ENCODE measurements at regions of chr6 and their contacts with region 1.

Region 1: DNA sequence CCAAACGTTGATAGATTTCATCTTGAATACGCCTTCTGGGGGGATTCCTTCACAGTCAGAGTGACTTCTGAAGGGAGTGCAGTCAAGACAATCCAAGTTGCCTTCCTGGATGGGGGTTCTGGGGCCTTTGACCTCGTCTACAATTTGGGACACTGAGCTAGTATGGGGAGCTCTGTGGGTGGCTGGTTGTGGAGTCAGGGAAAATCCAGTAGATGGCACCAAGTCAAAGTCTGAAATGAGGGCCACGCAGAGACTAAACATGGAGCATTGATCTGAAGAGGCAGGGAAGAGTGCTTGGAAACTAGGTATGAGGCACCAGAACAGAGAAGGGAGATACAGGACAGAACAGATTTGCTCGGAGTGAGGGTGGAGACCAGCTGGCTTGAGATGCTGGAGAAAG is 43.6 kb upstream of the CCN6 start:
- DNase-seq: peak in 2 of 5 donors; percentile 33 to 51
- H3K4me3 ChIP-seq: no peak overlapping the region
- H3K4me3 Mint-ChIP-seq: no peak overlapping the region
- H3K27ac ChIP-seq: no peak overlapping the region
- H3K27ac Mint-ChIP-seq: peak overlapping the region in 2 of 8 donors; percentile 2 to 44
- H3K4me1 ChIP-seq: peaks cover 5% of the 10 kb centered on the region
- H3K4me1 Mint-ChIP-seq: peaks cover 0 to 4% (median 0%) of the 10 kb centered on the region in 3 donors
- H3K27me3 ChIP-seq: no peaks in the 10 kb centered on the region
- H3K27me3 Mint-ChIP-seq: peaks cover 0 to 4% of the 10 kb centered on the region in 2 donors

Region 2: DNA sequence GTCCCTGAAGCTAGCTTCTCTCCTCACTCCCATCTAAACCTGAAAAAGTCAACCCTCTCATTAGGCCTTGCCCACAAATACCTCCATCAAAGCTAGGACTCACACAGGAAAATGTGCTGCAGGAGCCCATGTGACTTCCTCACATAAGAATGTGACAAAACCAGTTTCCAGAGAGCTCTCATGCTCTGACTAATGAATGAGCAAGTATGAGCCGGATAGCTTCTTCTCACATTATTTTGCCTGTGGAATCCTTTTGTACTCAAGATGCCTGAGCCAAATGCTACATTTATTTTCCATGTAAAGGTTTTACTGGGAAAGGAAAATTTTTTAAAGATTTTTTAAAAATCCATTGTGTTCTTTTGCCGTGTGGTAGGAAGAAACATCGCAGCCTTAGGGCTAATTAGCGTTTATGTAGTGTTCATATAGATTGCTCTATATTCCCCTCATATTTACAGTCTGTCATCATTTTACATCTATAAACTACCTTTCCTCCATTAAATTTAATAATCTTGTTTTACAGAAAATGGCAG is 25.1 kb before region 1 on chr6:
- CTCF ChIA-PET with region 1: no interaction called
- POLR2A ChIA-PET with region 1: no interaction called
- DNase-seq: peak in 1 of 5 donors; percentile 41
- H3K4me3 ChIP-seq: no peak overlapping the region
- H3K4me3 Mint-ChIP-seq: peak overlapping the region in 5 of 7 donors; percentile 0 to 71 (median 29)
- H3K27ac ChIP-seq: no peak overlapping the region
- H3K27ac Mint-ChIP-seq: peak overlapping the region in 6 of 8 donors; percentile 2 to 95 (median 48)
- H3K4me1 ChIP-seq: peaks cover 79% of the 10 kb centered on the region
- H3K4me1 Mint-ChIP-seq: peaks cover 59 to 75% (median 66%) of the 10 kb centered on the region in 3 donors
- H3K27me3 ChIP-seq: no peaks in the 10 kb centered on the region
- H3K27me3 Mint-ChIP-seq: no peaks in the 10 kb centered on the region

Region 3: GRCh38 chr6:112029045-112029822 is 18.9 kb after region 1 on chr6:
- CTCF ChIA-PET with region 1: interaction called, 23 read pairs
- POLR2A ChIA-PET with region 1: interaction called, 6 read pairs
- DNase-seq: peak; percentile 32 to 68 (median 46)
- H3K4me3 ChIP-seq: peak overlapping the region; percentile 16
- H3K4me3 Mint-ChIP-seq: peak overlapping the region in 6 of 7 donors; percentile 17 to 73 (median 66)
- H3K27ac ChIP-seq: no peak overlapping the region
- H3K27ac Mint-ChIP-seq: peak overlapping the region; percentile 79 to 96 (median 93)
- H3K4me1 ChIP-seq: peaks cover 69% of the 10 kb centered on the region
- H3K4me1 Mint-ChIP-seq: peaks cover 47 to 72% (median 65%) of the 10 kb centered on the region in 3 donors
- H3K27me3 ChIP-seq: no peaks in the 10 kb centered on the region
- H3K27me3 Mint-ChIP-seq: peaks cover 0 to 2% of the 10 kb centered on the region in 2 donors

Region 4: DNA sequence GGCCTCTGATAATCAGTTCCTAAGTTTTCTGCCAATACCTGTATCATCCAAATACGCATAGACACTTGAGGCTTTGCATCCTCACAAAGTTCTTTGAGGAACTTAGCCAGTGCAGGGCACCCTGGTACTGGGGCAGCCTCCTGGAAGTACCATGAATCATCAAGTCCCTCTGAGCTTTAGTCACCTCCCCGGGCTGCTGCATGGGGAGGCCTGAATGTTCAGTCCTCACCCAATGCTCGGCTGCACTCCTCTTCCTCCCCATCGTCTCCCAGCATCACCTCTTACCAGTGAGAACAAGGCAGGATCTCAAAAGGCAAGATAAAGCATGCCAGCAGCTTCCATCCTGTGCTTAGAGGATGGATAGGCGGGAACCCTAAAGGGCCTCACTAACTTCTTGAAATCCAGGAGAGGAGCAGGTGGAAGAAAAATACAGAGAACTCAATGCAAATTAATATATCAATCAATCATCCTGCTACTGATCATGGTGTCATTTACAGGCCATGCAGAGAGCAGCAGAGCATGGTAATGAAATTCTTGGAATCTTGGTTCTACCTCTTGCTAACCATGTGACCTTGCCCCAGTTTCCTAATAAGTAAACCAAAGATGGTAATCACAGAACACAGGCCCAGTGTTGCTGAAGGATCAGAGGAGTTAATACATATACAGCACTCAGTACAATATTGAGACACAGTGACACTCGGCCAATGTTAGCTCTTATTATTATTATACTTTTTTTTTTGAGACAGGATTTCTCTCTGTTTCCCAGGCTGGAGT is 38.9 kb after region 1 on chr6:
- CTCF ChIA-PET with region 1: interaction called, 103 read pairs
- POLR2A ChIA-PET with region 1: no interaction called
- DNase-seq: no peak
- H3K4me3 ChIP-seq: no peak overlapping the region
- H3K4me3 Mint-ChIP-seq: no peak overlapping the region
- H3K27ac ChIP-seq: no peak overlapping the region
- H3K27ac Mint-ChIP-seq: peak overlapping the region in 1 of 8 donors; percentile 51
- H3K4me1 ChIP-seq: no peaks in the 10 kb centered on the region
- H3K4me1 Mint-ChIP-seq: no peaks in the 10 kb centered on the region
- H3K27me3 ChIP-seq: no peaks in the 10 kb centered on the region
- H3K27me3 Mint-ChIP-seq: peaks cover 0 to 9% of the 10 kb centered on the region in 2 donors

Measured in CD8-positive, alpha-beta memory T cell (primary cell).